Heart left ventricle (tissue), 16 donors: ENCODE measurements at regions of chr6 and their contacts with region 1.

Region 1: DNA sequence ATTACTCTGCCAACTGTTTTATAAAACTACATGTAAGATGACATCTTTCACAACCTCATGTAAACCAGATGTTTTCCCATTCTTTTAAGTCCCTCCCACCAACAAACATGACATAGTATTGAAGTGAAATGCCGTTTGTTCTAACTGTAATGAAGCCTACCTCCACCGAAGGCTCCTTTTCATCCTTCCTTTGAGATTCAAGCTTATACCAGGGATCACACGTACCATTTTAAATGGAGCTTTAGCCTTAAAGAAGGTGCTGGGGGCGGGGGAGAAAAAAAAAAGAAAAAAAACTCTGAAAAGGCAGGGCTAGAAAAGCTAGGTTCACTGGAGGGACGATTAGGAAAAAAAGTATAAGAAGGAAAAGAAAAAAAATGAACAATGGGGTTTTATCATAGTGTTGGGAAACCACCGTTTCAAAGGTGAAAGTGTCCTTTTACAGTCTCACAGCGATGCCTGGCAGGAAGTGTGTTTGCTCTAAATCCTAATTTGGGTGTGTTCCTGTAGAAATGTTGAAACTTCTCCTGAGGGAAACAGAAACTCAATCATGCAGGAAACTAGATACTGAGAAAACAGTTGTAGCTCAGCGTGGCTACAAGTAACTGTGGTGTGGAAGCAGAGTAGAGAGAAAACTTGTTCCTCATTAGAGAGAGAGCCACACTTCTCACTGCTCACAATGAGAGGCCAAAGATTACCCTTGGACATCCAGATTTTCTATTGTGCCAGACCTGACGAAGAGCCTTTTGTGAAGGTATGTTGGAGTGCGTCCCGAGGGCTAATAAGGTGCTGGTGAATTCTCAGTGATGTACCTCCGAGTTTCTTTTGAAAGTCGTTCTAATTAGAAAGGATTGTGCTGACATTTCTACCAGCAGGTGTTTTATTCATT is 37.6 kb upstream of the HINT3 start:
- DNase-seq: peak in 2 of 5 donors; percentile 23 to 30
- ATAC-seq: peak in 3 of 4 donors; percentile 85 to 89 (median 88)
- H3K4me3 ChIP-seq: peak overlapping the region in 9 of 12 donors; percentile 26 to 52 (median 37)
- H3K27ac ChIP-seq: peak overlapping the region; percentile 31 to 86 (median 66)
- H3K4me1 ChIP-seq: peaks cover 0 to 51% (median 9%) of the 10 kb centered on the region in 12 donors
- H3K27me3 ChIP-seq: no peaks in the 10 kb centered on the region
- CTCF ChIP-seq: no peak
- POLR2A ChIP-seq: no peak

Region 2: GRCh38 chr6:124119596-124119995 is 1799.3 kb before region 1 on chr6:
- intact Hi-C with region 1: no loop called
- DNase-seq: no peak
- ATAC-seq: no peak
- H3K4me3 ChIP-seq: no peak overlapping the region
- H3K27ac ChIP-seq: no peak overlapping the region
- H3K4me1 ChIP-seq: no peaks in the 10 kb centered on the region
- H3K27me3 ChIP-seq: no peaks in the 10 kb centered on the region
- CTCF ChIP-seq: no peak
- POLR2A ChIP-seq: no peak

Region 3: DNA sequence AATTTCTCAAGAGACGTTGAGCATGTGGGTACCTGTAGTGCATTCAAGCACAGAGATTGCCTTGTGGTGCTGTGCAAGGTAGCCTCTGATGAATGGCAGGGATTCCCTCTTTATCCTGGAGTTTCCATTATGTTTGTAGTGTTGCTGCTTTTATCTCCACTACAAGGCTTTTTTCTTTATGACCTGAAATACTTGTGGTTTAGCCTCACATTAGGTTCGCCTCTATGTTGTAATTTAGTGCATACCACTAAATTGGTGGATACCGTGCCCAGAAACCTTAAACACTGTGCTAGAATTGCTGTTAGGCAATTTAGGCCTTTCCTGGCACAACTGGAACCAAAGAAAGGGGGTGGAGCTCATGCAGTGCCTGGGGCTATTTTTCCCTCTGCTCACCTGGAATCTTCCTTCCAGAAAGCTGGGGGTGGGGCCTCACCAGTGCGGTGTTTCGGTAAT is 51.4 kb before region 1 on chr6:
- intact Hi-C with region 1: loop called in 1 of 10 experiments (anchors 10 kb)
- DNase-seq: no peak
- ATAC-seq: no peak
- H3K4me3 ChIP-seq: no peak overlapping the region
- H3K27ac ChIP-seq: no peak overlapping the region
- H3K4me1 ChIP-seq: peaks cover 0 to 15% (median 5%) of the 10 kb centered on the region in 12 donors
- H3K27me3 ChIP-seq: no peaks in the 10 kb centered on the region
- CTCF ChIP-seq: no peak
- POLR2A ChIP-seq: no peak

Region 4: DNA sequence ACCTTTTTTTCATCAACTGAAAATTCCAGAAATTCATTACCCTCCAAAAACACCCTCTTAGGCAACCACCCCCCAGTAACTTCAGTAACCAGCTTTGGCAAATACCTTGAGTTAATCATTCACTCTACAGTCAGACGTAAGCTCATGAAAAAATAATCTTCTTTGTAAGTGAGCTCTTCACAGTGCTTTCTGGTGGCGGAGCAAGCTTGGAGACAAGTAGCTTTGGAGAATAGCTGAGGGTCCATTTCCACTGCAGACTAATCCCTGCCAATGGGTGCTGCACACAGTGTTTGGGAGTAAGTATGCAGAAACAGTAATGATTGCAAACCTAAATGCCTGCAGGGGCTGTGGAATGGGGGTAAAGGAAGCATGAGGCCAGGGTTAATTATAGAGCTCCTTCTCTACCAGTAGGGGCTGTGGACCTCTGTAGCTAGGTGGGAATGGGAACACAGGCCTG is 19.2 kb before region 1 on chr6:
- intact Hi-C with region 1: loop called in 1 of 10 experiments (anchors 1 kb)
- DNase-seq: no peak
- ATAC-seq: no peak
- H3K4me3 ChIP-seq: no peak overlapping the region
- H3K27ac ChIP-seq: no peak overlapping the region
- H3K4me1 ChIP-seq: no peaks in the 10 kb centered on the region
- H3K27me3 ChIP-seq: no peaks in the 10 kb centered on the region
- CTCF ChIP-seq: no peak
- POLR2A ChIP-seq: no peak